Activated CD8-positive, alpha-beta T cell treated with anti-CD3 and anti-CD28 coated beads, Interleukin-2, amount 10 ng/mL, durations not matched to agents 7 days and 5 days (primary cell): ENCODE measurements at regions of chr4 and their contacts with region 1.

Region 1: DNA sequence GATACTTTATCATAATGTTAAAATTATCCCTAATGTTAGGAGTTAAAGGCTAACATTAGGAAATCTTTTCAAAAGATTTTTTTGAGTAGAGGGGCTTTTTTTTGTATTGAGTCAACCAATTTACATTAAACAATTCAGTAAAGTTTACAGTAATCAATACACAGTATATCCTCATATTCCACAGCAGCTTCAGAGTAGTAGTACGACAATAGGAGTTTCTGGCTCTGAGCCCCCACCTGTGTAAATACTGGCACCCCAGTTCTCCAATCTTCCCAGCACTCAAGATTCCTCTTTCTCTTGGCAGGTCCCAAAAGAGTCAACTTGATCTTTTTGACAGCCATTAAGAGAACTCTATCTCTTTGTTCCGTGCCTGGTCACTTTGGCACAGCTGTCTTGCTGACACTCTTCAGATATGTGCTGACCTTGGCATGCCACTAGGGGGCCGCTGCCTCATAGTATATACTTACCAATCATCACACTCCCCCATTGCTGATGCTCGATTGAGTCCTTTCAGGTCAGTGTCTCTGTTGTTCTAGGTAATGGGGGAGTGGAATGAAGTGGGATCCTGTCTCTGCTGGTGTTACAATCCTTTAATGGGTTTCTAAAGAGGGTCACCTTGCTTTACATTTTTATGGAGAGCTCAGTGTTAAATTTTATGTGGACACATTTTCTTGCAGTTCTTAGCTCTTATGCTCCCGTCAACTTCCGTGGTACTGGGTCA is 19.5 kb upstream of the CCNI start:
- DNase-seq: peak; percentile 84
- ATAC-seq: peak; percentile 100
- H3K4me3 Mint-ChIP-seq: no peak overlapping the region
- H3K27ac Mint-ChIP-seq: no peak overlapping the region
- H3K4me1 Mint-ChIP-seq: peaks cover 12% of the 10 kb centered on the region
- H3K27me3 Mint-ChIP-seq: no peaks in the 10 kb centered on the region

Region 2: GRCh38 chr4:76836860-76837562 is 258.2 kb before region 1 on chr4:
- CTCF ChIA-PET with region 1: no interaction called
- POLR2A ChIA-PET with region 1: no interaction called
- DNase-seq: no peak
- ATAC-seq: no peak
- H3K4me3 Mint-ChIP-seq: no peak overlapping the region
- H3K27ac Mint-ChIP-seq: no peak overlapping the region
- H3K4me1 Mint-ChIP-seq: no peaks in the 10 kb centered on the region
- H3K27me3 Mint-ChIP-seq: no peaks in the 10 kb centered on the region

Region 3: GRCh38 chr4:77052352-77052751 is 42.9 kb before region 1 on chr4:
- CTCF ChIA-PET with region 1: interaction called, 13 read pairs
- POLR2A ChIA-PET with region 1: no interaction called
- DNase-seq: peak; percentile 72
- ATAC-seq: peak; percentile 60
- H3K4me3 Mint-ChIP-seq: no peak overlapping the region
- H3K27ac Mint-ChIP-seq: no peak overlapping the region
- H3K4me1 Mint-ChIP-seq: no peaks in the 10 kb centered on the region
- H3K27me3 Mint-ChIP-seq: no peaks in the 10 kb centered on the region

Region 4: GRCh38 chr4:77082886-77083608 is 12.2 kb before region 1 on chr4:
- CTCF ChIA-PET with region 1: interaction called, 19 read pairs
- POLR2A ChIA-PET with region 1: no interaction called
- DNase-seq: no peak
- ATAC-seq: no peak
- H3K4me3 Mint-ChIP-seq: no peak overlapping the region
- H3K27ac Mint-ChIP-seq: no peak overlapping the region
- H3K4me1 Mint-ChIP-seq: peaks cover 12% of the 10 kb centered on the region
- H3K27me3 Mint-ChIP-seq: no peaks in the 10 kb centered on the region

Region 5: GRCh38 chr4:77132652-77133312 is 37.5 kb after region 1 on chr4:
- CTCF ChIA-PET with region 1: interaction called, 37 read pairs
- POLR2A ChIA-PET with region 1: no interaction called
- DNase-seq: no peak
- ATAC-seq: no peak
- H3K4me3 Mint-ChIP-seq: no peak overlapping the region
- H3K27ac Mint-ChIP-seq: no peak overlapping the region
- H3K4me1 Mint-ChIP-seq: peaks cover 3% of the 10 kb centered on the region
- H3K27me3 Mint-ChIP-seq: peaks cover 2% of the 10 kb centered on the region

Region 6: DNA sequence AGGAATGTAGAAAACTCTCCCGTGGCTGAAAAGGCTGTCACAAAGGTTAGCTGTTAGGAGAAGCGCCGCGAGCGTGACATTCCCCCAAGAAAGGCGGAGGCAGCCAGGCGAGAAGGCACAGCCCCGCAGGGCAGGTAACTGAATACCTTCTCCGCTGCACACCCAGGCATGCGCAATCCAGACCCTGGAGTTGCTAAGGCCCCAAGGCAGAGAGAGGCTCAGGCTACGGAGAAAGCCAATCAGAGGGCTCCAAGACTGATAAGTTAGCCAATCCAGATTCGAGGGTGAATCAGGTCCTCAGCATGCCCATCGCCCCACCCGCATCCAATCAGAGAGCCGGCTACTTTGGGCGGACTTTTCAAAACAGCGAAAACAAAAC is 61.3 kb after region 1 on chr4:
- CTCF ChIA-PET with region 1: interaction called, 39 read pairs
- POLR2A ChIA-PET with region 1: interaction called, 6 read pairs
- DNase-seq: peak; percentile 98
- ATAC-seq: peak; percentile 97
- H3K4me3 Mint-ChIP-seq: peak overlapping the region; percentile 84
- H3K27ac Mint-ChIP-seq: peak overlapping the region; percentile 93
- H3K4me1 Mint-ChIP-seq: peaks cover 56% of the 10 kb centered on the region
- H3K27me3 Mint-ChIP-seq: no peaks in the 10 kb centered on the region

Region 7: DNA sequence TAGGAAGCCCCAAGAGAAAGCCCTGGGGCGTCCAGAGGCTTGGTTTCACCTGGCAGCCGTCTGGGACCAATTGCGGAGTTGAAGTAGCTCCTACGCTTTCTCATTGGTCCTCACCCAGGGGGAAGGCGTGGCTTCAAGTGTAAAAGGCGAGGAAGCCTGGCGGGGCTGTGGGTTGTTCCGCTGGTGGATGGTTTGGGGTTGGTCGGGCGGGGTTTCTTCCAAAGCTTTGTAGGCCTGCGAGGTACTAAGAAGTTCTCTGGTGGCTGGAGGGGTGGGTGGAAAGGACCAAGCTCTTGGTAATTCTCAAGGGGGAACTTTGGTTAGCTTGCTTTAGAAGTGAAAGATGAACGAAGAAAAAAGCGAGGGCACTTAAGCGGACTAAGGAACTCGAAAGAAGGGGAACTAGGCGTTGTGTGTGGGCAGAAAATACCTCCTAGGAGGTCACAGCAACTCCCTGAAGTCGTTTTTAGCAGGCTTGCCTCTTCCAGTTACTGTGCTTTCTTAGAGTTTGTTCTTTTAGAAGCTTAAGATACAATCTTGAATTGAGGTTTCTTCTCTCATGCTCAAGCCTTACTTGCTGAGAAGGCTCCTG is 98.3 kb after region 1 on chr4:
- CTCF ChIA-PET with region 1: interaction called, 296 read pairs
- POLR2A ChIA-PET with region 1: no interaction called
- DNase-seq: peak; percentile 82
- ATAC-seq: peak; percentile 99
- H3K4me3 Mint-ChIP-seq: peak overlapping the region; percentile 71
- H3K27ac Mint-ChIP-seq: peak overlapping the region; percentile 82
- H3K4me1 Mint-ChIP-seq: peaks cover 20% of the 10 kb centered on the region
- H3K27me3 Mint-ChIP-seq: peaks cover 3% of the 10 kb centered on the region